Caco-2 (cell line): ENCODE measurements at regions of chr13 and their contacts with region 1.

Region 1: DNA sequence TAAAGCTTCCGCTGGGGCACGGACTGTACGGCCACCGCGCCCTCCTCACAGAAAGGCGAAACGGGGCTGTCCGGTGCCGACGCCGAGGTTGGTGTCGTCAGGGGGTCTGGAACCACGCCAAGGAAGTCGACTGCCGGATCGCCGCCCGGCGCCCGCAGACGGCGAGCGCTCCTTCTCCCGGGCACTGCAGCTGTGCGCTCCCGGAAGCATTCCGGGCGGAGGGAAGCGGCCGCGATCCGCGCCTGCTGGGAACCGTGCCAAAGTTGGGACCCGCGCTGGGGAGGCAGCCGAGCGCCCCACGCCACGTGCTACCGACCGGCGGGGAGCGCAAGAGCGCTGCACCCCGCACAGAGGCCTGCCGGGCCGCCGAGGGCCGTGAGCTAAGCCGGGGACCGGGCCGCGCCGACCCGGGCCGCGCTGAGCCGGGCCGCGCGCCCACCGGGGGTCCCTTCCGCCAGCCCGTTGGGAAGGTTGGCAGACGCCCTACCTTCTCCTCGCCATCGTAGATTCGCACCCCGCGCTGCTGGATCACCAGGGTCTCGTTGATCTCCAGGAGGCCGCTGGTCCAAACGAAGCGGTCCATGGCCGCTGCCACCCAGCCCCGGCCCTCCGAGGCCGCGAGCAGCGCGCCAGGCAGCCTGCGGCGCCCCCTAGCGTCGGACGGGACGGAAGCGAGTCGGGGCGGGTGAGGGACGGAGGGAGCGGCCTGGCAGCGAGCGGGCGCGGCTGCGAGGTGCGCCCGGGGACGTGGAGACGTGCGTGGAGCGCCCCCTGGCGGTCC is at the start of gene VPS36:
- DNase-seq: peak; percentile 93 to 98
- H3K4me3 ChIP-seq: peak within 1 kb of the TSS; percentile 89
- H3K4me3 Mint-ChIP-seq: peak within 1 kb of the TSS; percentile 83
- H3K27ac Mint-ChIP-seq: peak within 1 kb of the TSS; percentile 69
- H3K4me1 ChIP-seq: no peaks in the 10 kb centered on the region; the same call in 1 of the 2 replicates
- H3K4me1 Mint-ChIP-seq: peaks cover 18% of the 10 kb centered on the region
- H3K27me3 ChIP-seq: no peaks in the 10 kb centered on the region
- H3K27me3 Mint-ChIP-seq: no peaks in the 10 kb centered on the region
- CTCF ChIP-seq: peak; percentile 92 to 98
- total RNA-seq, gene VPS36: 40.9 and 48.4 TPM in 2 replicates

Region 2: GRCh38 chr13:52159321-52160086 is 290.7 kb before region 1 on chr13 and contains the start of gene NEK3:
- CTCF ChIA-PET with region 1: no interaction called
- POLR2A ChIA-PET with region 1: no interaction called
- intact Hi-C with region 1: loop called (anchors 10 kb)
- DNase-seq: peak; percentile 79 to 82
- H3K4me3 ChIP-seq: peak within 1 kb of the TSS; percentile 91
- H3K4me3 Mint-ChIP-seq: peak within 1 kb of the TSS; percentile 76
- H3K27ac Mint-ChIP-seq: peak within 1 kb of the TSS; percentile 79
- H3K4me1 ChIP-seq: peaks cover 54% of the 10 kb centered on the region
- H3K4me1 Mint-ChIP-seq: peaks cover 54% of the 10 kb centered on the region
- H3K27me3 ChIP-seq: no peaks in the 10 kb centered on the region
- H3K27me3 Mint-ChIP-seq: no peaks in the 10 kb centered on the region
- CTCF ChIP-seq: no peak
- total RNA-seq, gene NEK3: 23.2 and 33.5 TPM in 2 replicates

Region 3: DNA sequence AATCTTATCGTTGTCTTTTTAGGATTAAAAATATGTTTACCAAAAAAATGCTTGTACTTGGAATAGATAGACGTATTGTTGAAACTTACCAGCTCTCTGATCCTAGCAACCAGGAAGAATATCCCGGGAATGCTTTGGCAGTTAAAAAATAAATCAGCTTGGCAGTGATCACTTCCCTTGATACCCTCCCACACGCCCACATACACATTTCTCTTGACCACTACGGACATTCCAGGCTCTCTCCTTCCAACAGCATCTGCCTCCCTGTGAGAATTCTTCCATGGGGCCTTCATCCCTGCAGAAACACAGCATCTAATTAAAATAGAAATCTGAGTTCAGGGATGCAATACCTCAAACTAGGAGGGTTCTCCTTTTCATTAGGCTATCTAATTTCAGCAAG is 102.1 kb before region 1 on chr13:
- CTCF ChIA-PET with region 1: interaction called, 23 read pairs
- POLR2A ChIA-PET with region 1: no interaction called
- intact Hi-C with region 1: loop called (anchors 1 kb)
- DNase-seq: no peak
- H3K4me3 ChIP-seq: no peak overlapping the region
- H3K4me3 Mint-ChIP-seq: no peak overlapping the region
- H3K27ac Mint-ChIP-seq: no peak overlapping the region
- H3K4me1 ChIP-seq: 0 out of 2 replicates have a peak, but pooled peaks cover 6% of the 10 kb centered on the region
- H3K4me1 Mint-ChIP-seq: no peaks in the 10 kb centered on the region
- H3K27me3 ChIP-seq: no peaks in the 10 kb centered on the region
- H3K27me3 Mint-ChIP-seq: no peaks in the 10 kb centered on the region
- CTCF ChIP-seq: no peak

Region 4: GRCh38 chr13:52428295-52428694 is 21.9 kb before region 1 on chr13:
- CTCF ChIA-PET with region 1: interaction called, 16 read pairs
- POLR2A ChIA-PET with region 1: interaction called, 12 read pairs
- intact Hi-C with region 1: loop called (anchors 1 kb)
- DNase-seq: peak in 1 of 2 experiments; percentile 55
- H3K4me3 ChIP-seq: no peak overlapping the region
- H3K4me3 Mint-ChIP-seq: no peak overlapping the region
- H3K27ac Mint-ChIP-seq: peak overlapping the region; percentile 42
- H3K4me1 ChIP-seq: peaks cover 18% of the 10 kb centered on the region
- H3K4me1 Mint-ChIP-seq: peaks cover 19% of the 10 kb centered on the region
- H3K27me3 ChIP-seq: no peaks in the 10 kb centered on the region
- H3K27me3 Mint-ChIP-seq: no peaks in the 10 kb centered on the region
- CTCF ChIP-seq: no peak

Region 5: GRCh38 chr13:52652196-52652979 is 202.2 kb after region 1 on chr13 and contains the start of gene SUGT1:
- CTCF ChIA-PET with region 1: interaction called, 5 read pairs
- POLR2A ChIA-PET with region 1: no interaction called
- intact Hi-C with region 1: loop called (anchors 5 kb)
- DNase-seq: peak; percentile 98
- H3K4me3 ChIP-seq: peak within 1 kb of the TSS; percentile 53
- H3K4me3 Mint-ChIP-seq: no peak within 1 kb of the TSS
- H3K27ac Mint-ChIP-seq: no peak within 1 kb of the TSS
- H3K4me1 ChIP-seq: peaks cover 17% of the 10 kb centered on the region
- H3K4me1 Mint-ChIP-seq: no peaks in the 10 kb centered on the region
- H3K27me3 ChIP-seq: no peaks in the 10 kb centered on the region
- H3K27me3 Mint-ChIP-seq: no peaks in the 10 kb centered on the region
- CTCF ChIP-seq: peak; percentile 71 to 83
- total RNA-seq, gene SUGT1: 73.6 and 84.3 TPM in 2 replicates

Region 6: GRCh38 chr13:53045189-53045588 is 595.0 kb after region 1 on chr13:
- CTCF ChIA-PET with region 1: no interaction called
- POLR2A ChIA-PET with region 1: no interaction called
- intact Hi-C with region 1: no loop called
- DNase-seq: no peak
- H3K4me3 ChIP-seq: no peak overlapping the region
- H3K4me3 Mint-ChIP-seq: no peak overlapping the region
- H3K27ac Mint-ChIP-seq: no peak overlapping the region
- H3K4me1 ChIP-seq: no peaks in the 10 kb centered on the region
- H3K4me1 Mint-ChIP-seq: no peaks in the 10 kb centered on the region
- H3K27me3 ChIP-seq: no peaks in the 10 kb centered on the region; the same call in none of the 2 replicates
- H3K27me3 Mint-ChIP-seq: peaks cover 21% of the 10 kb centered on the region
- CTCF ChIP-seq: no peak